ENCODE measurements at regions of chr2 and their contacts with region 1.

Region 1: GRCh38 chr2:157363612-157364101 is 38.0 kb upstream of the ERMN start:
- DNase-seq: no peak
- H3K4me3 Mint-ChIP-seq: no peak overlapping the region
- H3K27ac Mint-ChIP-seq: peak overlapping the region; percentile 23
- H3K4me1 Mint-ChIP-seq: peaks cover 24% of the 10 kb centered on the region
- H3K27me3 Mint-ChIP-seq: no peaks in the 10 kb centered on the region

Region 2: DNA sequence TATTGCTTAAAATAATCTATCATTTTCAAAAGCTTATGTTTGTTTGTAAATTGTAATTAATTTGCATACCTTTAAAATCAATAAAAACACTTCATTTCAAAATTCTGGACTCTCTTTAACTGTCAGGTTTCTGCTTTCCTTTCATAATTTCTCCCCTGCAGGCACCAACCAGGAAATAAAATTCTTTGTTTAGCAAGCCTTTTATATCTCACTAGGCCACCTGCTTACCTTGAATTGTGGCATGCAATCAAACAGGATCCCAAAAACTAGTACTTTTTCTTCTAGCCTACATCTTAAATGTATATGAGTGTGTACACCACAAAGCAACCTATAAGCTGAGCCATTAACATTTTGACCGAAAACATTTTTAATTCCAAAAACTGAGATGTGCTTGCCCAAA is 1264.3 kb before region 1 on chr2:
- CTCF ChIA-PET with region 1: no interaction called
- POLR2A ChIA-PET with region 1: no interaction called
- intact Hi-C with region 1: no loop called
- DNase-seq: no peak
- H3K4me3 Mint-ChIP-seq: no peak overlapping the region
- H3K27ac Mint-ChIP-seq: no peak overlapping the region
- H3K4me1 Mint-ChIP-seq: no peaks in the 10 kb centered on the region
- H3K27me3 Mint-ChIP-seq: peaks cover 4% of the 10 kb centered on the region

Region 3: DNA sequence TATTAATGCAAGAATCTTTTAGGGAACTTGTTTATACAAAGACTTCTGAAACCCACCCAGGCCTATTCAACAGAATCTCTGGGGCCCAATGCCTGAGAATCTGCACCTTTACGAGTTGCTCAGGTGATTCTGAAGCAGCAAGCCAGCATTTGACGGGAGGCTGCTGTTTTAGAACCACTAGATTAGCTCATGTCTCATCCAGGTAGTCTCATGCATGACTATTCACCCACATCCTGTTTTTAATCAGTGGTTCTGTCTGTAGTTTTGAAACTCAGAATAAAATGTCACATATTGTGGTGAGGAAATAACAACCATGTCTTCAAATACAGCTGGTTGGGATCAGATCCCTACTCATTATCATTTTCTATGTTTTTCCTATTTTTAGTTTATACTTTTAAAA is 40.7 kb after region 1 on chr2:
- CTCF ChIA-PET with region 1: no interaction called
- POLR2A ChIA-PET with region 1: no interaction called
- intact Hi-C with region 1: loop called (anchors 1 kb)
- DNase-seq: peak; percentile 73
- H3K4me3 Mint-ChIP-seq: no peak overlapping the region
- H3K27ac Mint-ChIP-seq: peak overlapping the region; percentile 78
- H3K4me1 Mint-ChIP-seq: peaks cover 68% of the 10 kb centered on the region
- H3K27me3 Mint-ChIP-seq: no peaks in the 10 kb centered on the region